ENCODE measurements at regions of chr11 and their contacts with region 1.

Region 1: GRCh38 chr11:67606492-67607201 is at the start of gene NDUFV1:
- DNase-seq: peak; percentile 93 to 96
- ATAC-seq: peak; percentile 95 to 96
- H3K4me3 ChIP-seq: peak within 1 kb of the TSS; percentile 81 to 100 (median 92)
- H3K27ac ChIP-seq: peak within 1 kb of the TSS; percentile 89 to 97 (median 91)
- H3K4me1 ChIP-seq: peaks cover 16 to 23% of the 10 kb centered on the region in 2 donors
- H3K27me3 ChIP-seq: no peaks in the 10 kb centered on the region
- CTCF ChIP-seq: peak; percentile 41 to 88 (median 79)
- POLR2A ChIP-seq: peak; percentile 64 to 73
- total RNA-seq, gene NDUFV1: 306 to 608 (median 365) TPM

Region 2: DNA sequence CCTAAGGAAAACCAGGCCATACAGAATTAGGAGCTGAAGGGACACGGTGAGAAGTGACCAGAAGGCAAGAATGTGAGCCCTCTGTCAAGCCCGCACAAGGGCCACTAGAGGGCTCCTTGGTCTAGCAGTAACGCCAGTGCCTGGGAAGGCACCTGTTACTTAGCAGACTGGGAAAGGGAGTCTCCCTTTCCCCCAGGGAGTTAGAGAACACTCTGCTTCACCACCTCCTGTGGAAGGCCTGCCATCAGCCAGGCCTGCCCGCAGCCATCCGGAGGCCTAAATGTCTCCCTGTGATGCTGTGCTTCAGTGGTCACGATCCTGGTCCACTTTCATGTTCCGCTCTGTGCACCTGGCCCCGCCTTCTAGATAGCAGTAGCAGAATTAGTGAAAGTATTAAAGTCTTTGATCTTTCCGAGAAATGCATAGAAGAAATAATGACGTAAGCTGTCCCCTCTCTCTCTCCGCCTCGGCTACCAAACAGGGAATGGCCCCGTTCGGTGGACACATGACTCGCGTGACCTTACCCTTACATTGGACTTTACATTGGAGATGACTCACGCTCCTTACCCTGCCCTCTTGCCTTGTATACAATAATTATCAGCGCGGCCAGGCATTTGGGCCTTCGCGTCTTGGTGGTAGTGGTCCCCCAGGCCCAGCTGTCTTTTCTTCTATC is 33.8 kb before region 1 on chr11:
- in situ Hi-C with region 1: no loop called
- intact Hi-C with region 1: loop called (anchors 1 kb)
- DNase-seq: peak; percentile 37 to 78
- ATAC-seq: peak; percentile 52 to 80
- H3K4me3 ChIP-seq: no peak overlapping the region
- H3K27ac ChIP-seq: peak overlapping the region in 2 of 4 donors; percentile 39 to 41
- H3K4me1 ChIP-seq: no peaks in the 10 kb centered on the region
- H3K27me3 ChIP-seq: no peaks in the 10 kb centered on the region
- CTCF ChIP-seq: peak; percentile 71 to 88 (median 76)
- POLR2A ChIP-seq: no peak

Region 3: DNA sequence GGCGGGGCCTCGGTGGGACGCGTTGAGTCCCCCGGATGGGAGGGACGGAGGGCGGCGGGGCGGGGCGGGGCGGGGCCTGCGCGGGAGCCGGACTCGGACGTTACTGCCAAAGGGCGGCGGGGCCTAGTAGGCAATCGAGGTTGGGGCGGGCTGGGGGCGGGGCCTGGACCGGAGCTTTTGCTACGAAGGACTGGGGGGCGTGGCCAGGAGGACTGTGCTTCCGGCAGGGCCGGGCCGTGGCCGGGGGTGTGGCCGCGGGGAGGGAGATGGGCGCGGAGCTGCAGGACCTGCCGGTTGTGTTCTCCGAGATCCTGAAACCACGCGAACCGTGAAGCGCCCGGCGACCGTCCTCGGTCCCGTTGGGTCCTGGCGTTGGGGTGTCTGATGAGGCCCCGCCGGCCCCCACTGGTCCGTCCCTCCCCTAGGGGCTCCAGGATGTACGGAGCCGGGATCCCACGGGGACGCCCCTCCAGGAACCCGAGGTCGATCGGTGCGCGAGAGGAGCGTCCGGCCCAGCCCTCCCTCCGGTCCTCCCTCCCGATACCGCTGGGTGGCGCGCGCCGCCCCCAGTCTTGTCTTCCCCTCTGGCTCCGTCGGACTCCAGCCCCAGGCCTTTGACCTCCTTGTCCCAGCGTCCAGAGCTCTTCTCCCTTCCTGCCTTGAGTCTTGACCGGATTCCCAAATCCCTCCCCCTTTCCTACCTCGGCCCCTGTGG is 23.7 kb after region 1 on chr11:
- in situ Hi-C with region 1: no loop called
- intact Hi-C with region 1: loop called (anchors 1 kb)
- DNase-seq: peak; percentile 97 to 98
- ATAC-seq: peak; percentile 81 to 84
- H3K4me3 ChIP-seq: peak overlapping the region; percentile 71 to 98 (median 82)
- H3K27ac ChIP-seq: peak overlapping the region; percentile 89 to 98 (median 92)
- H3K4me1 ChIP-seq: peaks cover 5% of the 10 kb centered on the region in 2 donors
- H3K27me3 ChIP-seq: no peaks in the 10 kb centered on the region
- CTCF ChIP-seq: peak; percentile 51 to 79 (median 71)
- POLR2A ChIP-seq: peak; percentile 54 to 56

Measured in gastrocnemius medialis (tissue), 4 donors.